Activated CD4-positive, alpha-beta T cell treated with anti-CD3 and anti-CD28 coated beads for 36 hours (primary cell): ENCODE measurements at regions of chr5 and their contacts with region 1.

Region 1: DNA sequence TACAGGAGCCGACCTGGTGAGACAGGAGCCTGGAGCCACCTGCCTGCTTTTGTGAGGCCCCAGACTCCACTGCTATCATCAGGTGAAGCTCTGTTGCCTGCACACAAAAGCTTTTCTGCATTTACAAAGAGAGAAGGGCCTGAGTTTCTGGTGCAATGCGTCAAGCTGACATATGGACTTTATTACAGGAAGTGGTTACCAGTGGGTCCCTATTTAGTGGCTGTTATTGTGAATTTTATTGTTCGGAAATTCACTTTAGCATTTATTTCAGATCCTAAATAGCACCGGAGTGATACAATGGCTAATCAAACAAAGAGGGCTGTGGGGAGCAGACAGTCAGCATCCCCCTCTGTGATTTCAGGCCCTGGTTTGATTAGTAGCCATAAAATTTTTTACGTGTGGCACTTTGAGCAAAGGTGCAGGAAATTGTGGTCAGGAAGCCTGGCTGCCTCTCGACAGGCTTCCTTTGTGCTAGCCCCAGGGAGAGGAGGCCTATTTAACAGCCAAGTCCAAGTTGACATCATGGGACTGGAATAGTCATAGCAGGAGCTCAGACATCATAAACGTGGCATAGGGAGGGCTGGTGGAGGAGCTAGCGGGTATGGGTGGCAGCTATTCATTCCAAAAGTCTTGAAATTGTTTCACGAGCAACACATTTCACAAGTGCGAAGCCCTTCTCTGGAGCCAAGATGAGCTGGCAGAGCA is 8.4 kb downstream of the TGFBI start:
- DNase-seq: peak; percentile 79
- ATAC-seq: peak; percentile 97
- H3K4me3 Mint-ChIP-seq: no peak overlapping the region
- H3K27ac Mint-ChIP-seq: peak overlapping the region; percentile 59
- H3K4me1 Mint-ChIP-seq: peaks cover 25% of the 10 kb centered on the region
- H3K27me3 Mint-ChIP-seq: no peaks in the 10 kb centered on the region

Region 2: DNA sequence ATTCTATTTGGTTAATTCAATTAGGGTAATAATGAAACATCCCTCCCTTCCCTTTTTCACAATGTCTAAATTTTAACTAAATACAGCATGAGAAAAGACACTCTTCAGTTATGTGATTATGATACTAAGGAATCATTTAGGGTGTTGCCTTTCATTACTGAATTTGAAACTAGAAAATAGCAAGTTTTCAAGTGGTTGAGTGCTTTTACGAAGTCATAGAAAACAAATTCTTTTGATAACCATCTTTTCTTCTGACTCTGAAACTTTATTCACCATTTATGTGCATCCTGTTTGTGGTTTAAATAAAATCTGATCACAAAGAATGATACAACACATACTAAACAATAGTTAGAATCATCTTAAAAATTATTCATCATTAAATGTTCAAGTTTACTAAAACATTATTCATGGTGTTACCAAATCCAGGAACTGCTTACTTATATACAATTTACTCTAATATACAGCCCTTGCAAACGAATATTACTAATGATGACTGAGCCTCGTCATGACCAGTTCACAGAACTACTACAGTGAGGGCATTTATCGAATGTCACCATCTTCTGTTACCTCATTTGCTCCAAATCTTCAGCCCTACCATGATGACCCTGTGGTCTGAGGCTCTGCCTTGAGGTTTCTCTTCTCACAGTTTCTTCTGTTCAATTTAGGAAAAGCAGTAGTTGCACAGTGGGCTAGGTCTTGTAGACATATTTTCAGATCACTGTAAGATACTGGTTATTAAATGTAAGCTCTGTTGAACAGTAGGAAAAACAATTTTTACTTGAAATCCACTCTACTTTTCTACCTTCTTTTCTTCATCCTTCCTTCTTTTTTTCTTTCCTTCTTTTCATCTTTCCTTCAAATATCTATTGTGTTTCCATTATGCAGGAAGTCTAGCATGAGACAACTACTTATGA is 123.2 kb before region 1 on chr5:
- CTCF ChIA-PET with region 1: no interaction called
- POLR2A ChIA-PET with region 1: no interaction called
- intact Hi-C with region 1: loop called in 1 of 2 experiments (anchors 1 kb)
- DNase-seq: peak; percentile 25
- ATAC-seq: peak; percentile 62
- H3K4me3 Mint-ChIP-seq: no peak overlapping the region
- H3K27ac Mint-ChIP-seq: no peak overlapping the region
- H3K4me1 Mint-ChIP-seq: peaks cover 27% of the 10 kb centered on the region
- H3K27me3 Mint-ChIP-seq: peaks cover 62% of the 10 kb centered on the region

Region 3: DNA sequence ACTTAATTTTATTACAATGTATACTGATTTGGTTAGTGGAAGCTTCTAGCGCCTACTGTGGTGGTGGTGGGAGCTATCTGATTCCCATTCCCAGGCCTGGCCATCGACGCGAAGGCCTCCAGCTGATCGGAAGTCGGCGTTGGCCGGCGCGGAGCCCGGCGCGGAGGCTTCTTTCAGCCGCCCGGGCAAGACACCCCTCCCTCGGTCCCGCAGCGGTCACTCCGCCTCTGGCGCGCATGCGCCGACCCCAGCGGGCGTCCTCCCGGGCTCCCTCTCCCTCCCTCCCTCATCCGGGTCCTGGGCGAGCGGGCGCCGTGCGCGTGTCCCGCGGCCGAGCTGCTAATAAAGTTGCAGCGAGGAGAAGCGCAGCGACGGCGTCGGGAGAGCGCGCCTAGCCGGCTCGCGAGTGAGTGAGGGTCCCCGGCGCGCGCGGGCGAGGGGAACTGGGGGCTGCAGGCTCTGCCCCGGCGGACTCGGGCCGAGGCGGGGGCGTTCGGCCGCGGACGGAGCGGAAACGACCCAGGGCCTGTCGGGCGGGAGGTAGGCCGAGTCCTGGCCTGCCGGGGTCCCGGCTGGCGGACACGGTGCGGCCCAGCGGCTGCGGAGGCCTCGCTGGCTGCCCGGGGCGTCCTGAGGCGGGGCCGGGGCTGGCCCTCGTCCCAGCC is 95.5 kb after region 1 on chr5 and contains the start of gene SMAD5:
- CTCF ChIA-PET with region 1: no interaction called
- POLR2A ChIA-PET with region 1: no interaction called
- intact Hi-C with region 1: loop called in 1 of 2 experiments (anchors 5 kb)
- DNase-seq: peak; percentile 85
- ATAC-seq: peak; percentile 86
- H3K4me3 Mint-ChIP-seq: peak within 1 kb of the TSS; percentile 74
- H3K27ac Mint-ChIP-seq: peak within 1 kb of the TSS; percentile 65
- H3K4me1 Mint-ChIP-seq: peaks cover 21% of the 10 kb centered on the region
- H3K27me3 Mint-ChIP-seq: peaks cover 36% of the 10 kb centered on the region
- total RNA-seq, gene SMAD5: 5.4 to 7.7 TPM